CD4-positive, alpha-beta memory T cell (primary cell): ENCODE measurements at regions of chr1 and their contacts with region 1.

Region 1: DNA sequence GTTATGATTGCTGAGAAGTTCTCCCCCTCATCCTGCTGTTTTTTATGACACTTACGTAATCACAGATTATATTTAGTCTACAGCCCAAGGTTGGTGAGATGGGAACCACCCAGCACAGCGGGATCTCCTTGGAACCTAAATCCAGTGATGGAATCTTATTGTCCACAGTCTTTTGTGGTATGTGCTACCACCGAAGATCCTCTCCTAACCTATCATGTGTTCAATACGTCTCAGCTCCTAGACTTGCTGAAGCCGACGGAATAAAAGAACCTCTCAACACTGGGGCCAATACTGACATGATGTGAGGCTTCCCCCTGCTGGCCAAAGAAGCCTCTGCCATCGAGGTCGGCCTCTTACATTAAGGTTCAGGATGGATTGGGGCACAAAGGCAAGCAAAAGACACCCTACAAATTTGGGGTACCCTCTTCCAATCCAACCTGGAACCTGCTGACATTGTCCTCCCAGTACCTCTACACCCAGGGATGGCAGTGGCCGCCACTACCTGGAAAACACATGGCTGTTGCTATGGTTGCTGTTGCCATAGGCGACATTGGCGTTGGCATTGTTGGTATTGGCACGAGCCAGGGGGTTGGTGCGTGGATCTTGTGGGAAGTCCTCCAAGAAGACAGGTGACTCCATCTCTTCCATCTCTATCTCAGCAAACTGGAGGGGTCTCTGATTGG is 19.4 kb upstream of the KIF21B start:
- DNase-seq: peak; percentile 67 to 74 (median 72)
- H3K4me3 ChIP-seq: no peak overlapping the region
- H3K4me3 Mint-ChIP-seq: no peak overlapping the region
- H3K27ac ChIP-seq: no peak overlapping the region
- H3K27ac Mint-ChIP-seq: peak overlapping the region in 2 of 7 donors; percentile 37 to 77
- H3K4me1 ChIP-seq: no peaks in the 10 kb centered on the region
- H3K4me1 Mint-ChIP-seq: peaks cover 0 to 3% (median 3%) of the 10 kb centered on the region in 4 donors
- H3K27me3 ChIP-seq: no peaks in the 10 kb centered on the region
- H3K27me3 Mint-ChIP-seq: peaks cover 0 to 3% of the 10 kb centered on the region in 2 donors

Region 2: DNA sequence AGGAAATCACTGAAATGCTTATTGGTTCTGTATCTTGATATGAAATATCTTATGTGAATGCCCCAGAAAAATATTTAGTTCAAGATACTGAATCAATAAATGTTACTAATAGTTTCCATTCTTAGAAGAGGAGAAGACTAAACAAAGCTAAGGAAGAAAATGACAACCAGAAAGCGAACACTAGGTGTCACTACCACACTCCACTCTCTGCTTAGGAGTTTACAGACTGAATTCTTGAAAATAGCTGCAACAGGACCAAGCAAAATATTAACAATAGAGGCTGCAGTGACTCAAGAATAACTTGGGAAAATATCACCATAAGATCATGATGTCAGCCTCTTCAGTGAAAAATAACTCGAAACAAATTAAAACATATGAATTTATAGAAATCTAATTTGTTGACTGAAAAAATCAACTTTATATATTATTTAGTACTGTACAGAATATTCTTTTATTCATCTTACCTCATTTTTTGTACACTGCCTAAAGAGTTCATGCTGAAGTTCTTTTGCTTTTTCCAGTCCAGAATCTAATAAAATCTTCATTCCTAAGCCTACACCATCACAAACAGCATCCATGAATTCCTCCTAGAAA is 484.0 kb before region 1 on chr1:
- CTCF ChIA-PET with region 1: no interaction called
- POLR2A ChIA-PET with region 1: no interaction called
- intact Hi-C with region 1: loop called (anchors 1 kb)
- DNase-seq: peak in 4 of 5 donors; percentile 5 to 12 (median 10)
- H3K4me3 ChIP-seq: no peak overlapping the region
- H3K4me3 Mint-ChIP-seq: no peak overlapping the region
- H3K27ac ChIP-seq: no peak overlapping the region
- H3K27ac Mint-ChIP-seq: peak overlapping the region in 1 of 7 donors; percentile 65
- H3K4me1 ChIP-seq: no peaks in the 10 kb centered on the region
- H3K4me1 Mint-ChIP-seq: peaks cover 0 to 2% (median 0%) of the 10 kb centered on the region in 4 donors
- H3K27me3 ChIP-seq: no peaks in the 10 kb centered on the region
- H3K27me3 Mint-ChIP-seq: no peaks in the 10 kb centered on the region

Region 3: GRCh38 chr1:200979574-200980451 is 63.1 kb before region 1 on chr1:
- CTCF ChIA-PET with region 1: interaction called, 488 read pairs
- POLR2A ChIA-PET with region 1: no interaction called
- intact Hi-C with region 1: loop called (anchors 1 kb)
- DNase-seq: peak; percentile 42 to 57 (median 53)
- H3K4me3 ChIP-seq: no peak overlapping the region
- H3K4me3 Mint-ChIP-seq: no peak overlapping the region
- H3K27ac ChIP-seq: no peak overlapping the region
- H3K27ac Mint-ChIP-seq: peak overlapping the region in 1 of 7 donors; percentile 61
- H3K4me1 ChIP-seq: no peaks in the 10 kb centered on the region
- H3K4me1 Mint-ChIP-seq: peaks cover 0 to 1% (median 0%) of the 10 kb centered on the region in 4 donors
- H3K27me3 ChIP-seq: no peaks in the 10 kb centered on the region
- H3K27me3 Mint-ChIP-seq: no peaks in the 10 kb centered on the region

Region 4: DNA sequence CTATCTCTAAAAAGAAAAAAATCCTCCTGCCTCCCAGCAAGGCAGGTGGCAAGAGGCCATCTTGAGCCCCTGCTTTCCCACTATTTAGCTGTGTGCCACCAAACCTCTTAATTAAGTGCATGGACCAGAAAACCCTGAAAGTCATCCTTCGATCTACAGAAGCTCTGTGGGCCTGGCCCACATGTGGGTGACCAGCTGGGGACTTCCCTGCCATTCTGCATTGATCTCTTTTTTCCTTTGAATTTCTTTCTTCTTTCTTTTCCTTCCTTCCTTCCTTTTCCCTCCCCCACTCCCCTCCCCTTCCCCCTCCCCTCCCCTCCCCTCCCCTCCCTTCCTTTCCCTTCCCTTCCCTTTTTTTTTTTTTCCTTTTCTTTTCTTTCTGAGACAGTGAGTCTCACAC is 57.4 kb before region 1 on chr1:
- CTCF ChIA-PET with region 1: interaction called, 488 read pairs
- POLR2A ChIA-PET with region 1: no interaction called
- intact Hi-C with region 1: no loop called
- DNase-seq: no peak
- H3K4me3 ChIP-seq: no peak overlapping the region
- H3K4me3 Mint-ChIP-seq: no peak overlapping the region
- H3K27ac ChIP-seq: no peak overlapping the region
- H3K27ac Mint-ChIP-seq: peak overlapping the region in 2 of 7 donors; percentile 29 to 59
- H3K4me1 ChIP-seq: no peaks in the 10 kb centered on the region
- H3K4me1 Mint-ChIP-seq: no peaks in the 10 kb centered on the region
- H3K27me3 ChIP-seq: no peaks in the 10 kb centered on the region
- H3K27me3 Mint-ChIP-seq: no peaks in the 10 kb centered on the region

Region 5: GRCh38 chr1:200992382-200993048 is 50.4 kb before region 1 on chr1:
- CTCF ChIA-PET with region 1: interaction called, 6 read pairs
- POLR2A ChIA-PET with region 1: no interaction called
- intact Hi-C with region 1: loop called (anchors 1 kb)
- DNase-seq: peak in 1 of 5 donors; percentile 25
- H3K4me3 ChIP-seq: no peak overlapping the region
- H3K4me3 Mint-ChIP-seq: no peak overlapping the region
- H3K27ac ChIP-seq: no peak overlapping the region
- H3K27ac Mint-ChIP-seq: peak overlapping the region in 2 of 7 donors; percentile 10 to 87
- H3K4me1 ChIP-seq: no peaks in the 10 kb centered on the region
- H3K4me1 Mint-ChIP-seq: peaks cover 0 to 2% (median under 1%) of the 10 kb centered on the region in 4 donors
- H3K27me3 ChIP-seq: no peaks in the 10 kb centered on the region
- H3K27me3 Mint-ChIP-seq: no peaks in the 10 kb centered on the region

Region 6: GRCh38 chr1:201114236-201115131 is 71.6 kb after region 1 on chr1:
- CTCF ChIA-PET with region 1: interaction called, 6 read pairs
- POLR2A ChIA-PET with region 1: no interaction called
- intact Hi-C with region 1: loop called (anchors 2 kb)
- DNase-seq: peak; percentile 69 to 79 (median 74)
- H3K4me3 ChIP-seq: peak overlapping the region; percentile 57 to 65
- H3K4me3 Mint-ChIP-seq: peak overlapping the region; percentile 89 to 96 (median 92)
- H3K27ac ChIP-seq: peak overlapping the region; percentile 38
- H3K27ac Mint-ChIP-seq: peak overlapping the region; percentile 75 to 93 (median 89)
- H3K4me1 ChIP-seq: peaks cover 11% of the 10 kb centered on the region
- H3K4me1 Mint-ChIP-seq: peaks cover 3 to 22% (median 10%) of the 10 kb centered on the region in 4 donors
- H3K27me3 ChIP-seq: no peaks in the 10 kb centered on the region
- H3K27me3 Mint-ChIP-seq: no peaks in the 10 kb centered on the region